Transverse colon (tissue), 4 donors: ENCODE measurements at regions of chr2 and their contacts with region 1.

Region 1: DNA sequence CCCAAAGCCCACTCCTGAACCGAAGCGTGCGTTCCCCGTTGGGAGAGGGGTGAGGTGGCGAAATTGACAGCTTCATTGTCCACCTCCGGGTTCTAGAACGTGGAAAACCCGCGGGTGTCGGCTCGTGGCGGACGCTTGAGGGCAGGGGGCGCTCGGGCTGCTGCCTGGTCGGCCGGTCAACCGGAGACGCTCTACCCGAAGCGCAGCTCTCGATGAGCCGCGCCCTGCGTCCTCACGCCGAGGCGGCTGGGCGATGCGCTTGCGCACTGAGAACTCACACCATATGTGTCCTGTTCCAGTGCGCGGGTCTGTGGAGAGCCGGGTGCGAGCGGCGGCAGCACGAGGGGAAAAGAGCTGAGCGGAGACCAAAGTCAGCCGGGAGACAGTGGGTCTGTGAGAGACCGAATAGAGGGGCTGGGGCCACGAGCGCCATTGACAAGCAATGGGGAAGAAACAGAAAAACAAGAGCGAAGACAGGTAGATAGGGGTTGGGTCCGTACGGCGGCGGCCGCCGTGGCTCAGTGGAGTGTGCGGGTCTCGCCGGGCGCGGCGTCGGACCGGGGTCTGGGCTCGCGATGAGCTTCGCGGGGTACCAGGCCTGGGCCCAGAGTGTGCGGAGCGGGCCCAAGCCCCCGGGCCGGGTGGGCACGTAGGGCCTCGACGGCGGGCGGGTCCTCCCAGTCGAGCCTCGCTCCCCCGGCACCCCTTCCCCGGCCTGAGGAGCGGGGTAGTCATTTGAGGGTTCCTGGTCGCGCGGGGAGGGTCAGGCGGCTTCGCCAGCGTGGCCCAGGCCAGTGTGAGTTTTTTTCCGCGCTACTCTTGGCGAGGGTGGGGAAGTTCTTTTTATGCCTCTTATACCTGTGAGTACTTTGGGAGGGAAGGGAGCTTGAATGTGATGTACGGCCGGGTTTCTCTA is at the start of gene EIF5B:
- DNase-seq: peak; percentile 97
- H3K4me3 ChIP-seq: peak within 1 kb of the TSS; percentile 91 to 98 (median 93)
- H3K27ac ChIP-seq: peak within 1 kb of the TSS; percentile 93 to 97 (median 94)
- H3K4me1 ChIP-seq: peaks cover 16 to 47% (median 30%) of the 10 kb centered on the region in 4 donors
- H3K27me3 ChIP-seq: no peaks in the 10 kb centered on the region
- CTCF ChIP-seq: peak in 4 of 5 experiments; percentile 42 to 58 (median 54)
- EP300 ChIP-seq: no peak
- POLR2A ChIP-seq: peak; percentile 74
- total RNA-seq, gene EIF5B: 13.1 to 32.6 (median 20.6) TPM

Region 2: GRCh38 chr2:99180755-99181623 is 156.4 kb before region 1 on chr2 and contains the starts of genes MITD1 and MRPL30:
- in situ Hi-C with region 1: loop called in 3 of 4 experiments (anchors 10 to 25 kb)
- intact Hi-C with region 1: no loop called
- DNase-seq: peak; percentile 93
- H3K4me3 ChIP-seq: peak within 1 kb of the TSS; percentile 57 to 86 (median 67)
- H3K27ac ChIP-seq: peak within 1 kb of the TSS; percentile 81 to 87 (median 84)
- H3K4me1 ChIP-seq: peaks cover 18 to 39% (median 23%) of the 10 kb centered on the region in 4 donors
- H3K27me3 ChIP-seq: no peaks in the 10 kb centered on the region
- CTCF ChIP-seq: no peak
- EP300 ChIP-seq: no peak
- POLR2A ChIP-seq: peak; percentile 87
- total RNA-seq, gene MITD1: 5.0 to 30.6 (median 24.0) TPM
- total RNA-seq, gene MRPL30: 12.5 to 23.0 (median 17.6) TPM